ENCODE measurements at regions of chr2 and their contacts with region 1.

Region 1: GRCh38 chr2:176454893-176455811 is 185.9 kb downstream of the MTX2 start:
- DNase-seq: peak; percentile 88
- ATAC-seq: peak; percentile 58

Region 2: GRCh38 chr2:176140513-176141317 is 314.4 kb before region 1 on chr2:
- intact Hi-C with region 1: loop called (anchors 10 kb)
- DNase-seq: peak; percentile 80
- ATAC-seq: peak; percentile 97

Region 3: DNA sequence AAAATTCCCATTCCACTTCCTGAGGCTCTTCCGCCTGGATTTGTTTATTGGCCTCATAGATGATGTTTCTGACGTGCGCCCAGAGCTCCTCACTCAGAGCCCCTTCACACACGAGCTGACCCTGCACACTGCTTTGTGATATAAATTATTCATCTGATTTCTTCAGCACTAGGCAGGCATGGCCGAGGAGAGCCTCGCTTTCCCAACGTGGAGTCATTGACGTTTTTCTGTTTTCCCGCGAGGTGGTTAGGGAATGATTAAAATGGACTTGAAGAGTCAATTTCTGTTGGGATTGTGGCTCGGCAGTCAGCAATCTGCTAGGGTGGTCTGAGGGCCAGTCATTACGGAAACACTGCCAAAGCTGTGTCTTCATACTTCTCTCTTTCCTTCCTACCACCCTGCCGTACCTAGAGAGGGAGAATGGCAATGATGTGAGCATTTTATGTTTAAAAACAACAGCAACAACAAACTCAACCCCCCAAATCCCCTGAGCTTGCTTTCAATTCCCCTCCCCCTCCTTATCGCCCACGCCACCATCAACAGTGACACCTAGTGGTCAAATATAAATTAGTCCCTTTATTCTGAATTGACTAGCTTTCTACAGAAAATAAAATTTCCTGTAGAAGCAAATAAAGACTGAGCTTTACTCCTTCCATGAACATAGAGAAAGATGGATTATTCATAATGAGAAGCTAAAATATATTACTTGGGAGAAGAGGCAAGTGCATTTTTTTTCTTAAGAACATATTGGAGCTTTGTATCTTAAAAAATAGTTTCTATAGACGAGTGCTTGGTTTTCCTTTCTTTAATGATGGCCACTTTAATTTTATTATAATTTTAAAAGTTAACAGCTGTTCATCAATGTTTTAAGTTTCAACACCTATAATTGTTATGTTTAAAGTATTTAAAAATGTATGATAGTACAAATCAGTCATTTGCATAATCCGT is 99.2 kb after region 1 on chr2:
- intact Hi-C with region 1: loop called (anchors 10 kb)
- DNase-seq: peak; percentile 30
- ATAC-seq: peak; percentile 82